Activated CD8-positive, alpha-beta T cell treated with anti-CD3 and anti-CD28 coated beads for 36 hours (primary cell): ENCODE measurements at regions of chr1 and their contacts with region 1.

Region 1: GRCh38 chr1:178542560-178543356 is 29.8 kb downstream of the TEX35 start:
- DNase-seq: peak; percentile 90
- ATAC-seq: peak; percentile 93
- H3K4me3 Mint-ChIP-seq: peak overlapping the region; percentile 86
- H3K27ac Mint-ChIP-seq: peak overlapping the region; percentile 87
- H3K4me1 Mint-ChIP-seq: peaks cover 6% of the 10 kb centered on the region
- H3K27me3 Mint-ChIP-seq: no peaks in the 10 kb centered on the region
- CTCF ChIP-seq: peak; percentile 98

Region 2: DNA sequence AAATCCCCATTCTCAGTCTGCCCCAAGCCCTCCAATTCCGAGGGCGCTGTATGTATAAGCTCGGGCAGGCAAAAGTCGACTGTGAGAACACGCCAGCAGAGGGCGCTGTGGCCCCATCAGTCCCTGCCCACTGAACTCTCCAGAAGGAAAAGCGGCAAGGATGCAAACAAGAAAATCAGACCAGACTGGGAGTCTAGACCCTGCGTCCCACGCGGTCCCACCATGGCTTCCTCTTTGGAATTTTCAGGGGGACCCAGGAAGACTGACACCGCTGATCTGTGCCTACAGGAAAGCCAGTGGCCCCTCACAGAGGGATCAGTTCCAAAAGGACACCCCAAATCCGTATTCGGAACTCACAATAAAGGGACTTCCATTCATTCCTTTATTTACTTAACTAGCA is 10.4 kb before region 1 on chr1:
- CTCF ChIA-PET with region 1: interaction called, 10 read pairs
- POLR2A ChIA-PET with region 1: interaction called, 3 read pairs
- intact Hi-C with region 1: no loop called
- DNase-seq: peak; percentile 83
- ATAC-seq: peak; percentile 87
- H3K4me3 Mint-ChIP-seq: no peak overlapping the region
- H3K27ac Mint-ChIP-seq: no peak overlapping the region
- H3K4me1 Mint-ChIP-seq: no peaks in the 10 kb centered on the region
- H3K27me3 Mint-ChIP-seq: no peaks in the 10 kb centered on the region
- CTCF ChIP-seq: peak; percentile 86

Region 3: GRCh38 chr1:178629252-178630154 is 86.7 kb after region 1 on chr1:
- CTCF ChIA-PET with region 1: no interaction called
- POLR2A ChIA-PET with region 1: no interaction called
- intact Hi-C with region 1: loop called (anchors 10 kb)
- DNase-seq: no peak
- ATAC-seq: no peak
- H3K4me3 Mint-ChIP-seq: no peak overlapping the region
- H3K27ac Mint-ChIP-seq: no peak overlapping the region
- H3K4me1 Mint-ChIP-seq: no peaks in the 10 kb centered on the region
- H3K27me3 Mint-ChIP-seq: peaks cover 3% of the 10 kb centered on the region
- CTCF ChIP-seq: no peak

Region 4: GRCh38 chr1:178749581-178750166 is 206.9 kb after region 1 on chr1:
- CTCF ChIA-PET with region 1: interaction called, 41 read pairs
- POLR2A ChIA-PET with region 1: no interaction called
- intact Hi-C with region 1: loop called (anchors 2 kb)
- DNase-seq: no peak
- ATAC-seq: no peak
- H3K4me3 Mint-ChIP-seq: no peak overlapping the region
- H3K27ac Mint-ChIP-seq: no peak overlapping the region
- H3K4me1 Mint-ChIP-seq: peaks cover 3% of the 10 kb centered on the region
- H3K27me3 Mint-ChIP-seq: no peaks in the 10 kb centered on the region
- CTCF ChIP-seq: no peak

Region 5: GRCh38 chr1:178784131-178784536 is 241.4 kb after region 1 on chr1:
- CTCF ChIA-PET with region 1: no interaction called
- POLR2A ChIA-PET with region 1: no interaction called
- intact Hi-C with region 1: no loop called
- DNase-seq: no peak
- ATAC-seq: peak; percentile 74
- H3K4me3 Mint-ChIP-seq: peak overlapping the region; percentile 54
- H3K27ac Mint-ChIP-seq: peak overlapping the region; percentile 25
- H3K4me1 Mint-ChIP-seq: peaks cover 9% of the 10 kb centered on the region
- H3K27me3 Mint-ChIP-seq: no peaks in the 10 kb centered on the region
- CTCF ChIP-seq: no peak